CD4-positive, alpha-beta T cell (primary cell): ENCODE measurements at regions of chrX and their contacts with region 1.

Region 1: DNA sequence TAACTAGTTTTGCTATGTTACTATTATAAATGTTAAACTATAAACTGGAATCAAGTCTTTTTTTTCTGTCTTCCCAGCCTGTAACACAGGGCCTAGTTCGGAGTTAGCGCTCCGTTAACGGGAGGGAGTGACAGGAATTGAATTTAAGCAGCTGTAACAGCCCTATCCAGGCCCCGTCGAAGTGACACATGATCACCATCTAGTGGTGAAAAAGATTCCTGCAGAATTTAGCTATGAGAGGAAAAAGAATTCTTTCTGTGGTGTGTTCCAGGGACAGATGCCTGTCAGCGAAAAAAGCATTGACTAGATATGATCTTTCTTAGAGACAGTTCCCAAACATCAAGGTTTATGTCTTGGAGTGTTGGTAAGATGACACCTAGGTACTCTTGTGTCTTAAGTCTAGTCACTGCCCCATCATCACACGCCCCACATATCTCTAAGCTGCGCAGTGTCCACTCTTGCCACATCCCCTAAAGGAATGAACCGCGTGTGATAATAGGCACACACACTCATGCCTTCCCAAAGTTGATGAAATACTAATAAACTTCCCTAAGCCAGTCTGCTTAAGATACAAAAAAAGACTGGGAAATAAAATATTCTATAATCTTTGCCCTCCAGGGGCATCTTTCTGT is 2.0 kb downstream of the GAB3 start:
- DNase-seq: peak in 12 of 14 experiments; percentile 14 to 82 (median 34)
- ATAC-seq: peak; percentile 73
- H3K4me3 ChIP-seq: peak overlapping the region; percentile 22
- H3K4me3 Mint-ChIP-seq: peak overlapping the region; percentile 80
- H3K27ac ChIP-seq: no peak overlapping the region
- H3K27ac Mint-ChIP-seq: peak overlapping the region; percentile 60
- H3K4me1 ChIP-seq: peaks cover 25% of the 10 kb centered on the region
- H3K4me1 Mint-ChIP-seq: peaks cover 34% of the 10 kb centered on the region
- H3K27me3 ChIP-seq: no peaks in the 10 kb centered on the region
- H3K27me3 Mint-ChIP-seq: no peaks in the 10 kb centered on the region
- CTCF ChIP-seq: no peak

Region 2: DNA sequence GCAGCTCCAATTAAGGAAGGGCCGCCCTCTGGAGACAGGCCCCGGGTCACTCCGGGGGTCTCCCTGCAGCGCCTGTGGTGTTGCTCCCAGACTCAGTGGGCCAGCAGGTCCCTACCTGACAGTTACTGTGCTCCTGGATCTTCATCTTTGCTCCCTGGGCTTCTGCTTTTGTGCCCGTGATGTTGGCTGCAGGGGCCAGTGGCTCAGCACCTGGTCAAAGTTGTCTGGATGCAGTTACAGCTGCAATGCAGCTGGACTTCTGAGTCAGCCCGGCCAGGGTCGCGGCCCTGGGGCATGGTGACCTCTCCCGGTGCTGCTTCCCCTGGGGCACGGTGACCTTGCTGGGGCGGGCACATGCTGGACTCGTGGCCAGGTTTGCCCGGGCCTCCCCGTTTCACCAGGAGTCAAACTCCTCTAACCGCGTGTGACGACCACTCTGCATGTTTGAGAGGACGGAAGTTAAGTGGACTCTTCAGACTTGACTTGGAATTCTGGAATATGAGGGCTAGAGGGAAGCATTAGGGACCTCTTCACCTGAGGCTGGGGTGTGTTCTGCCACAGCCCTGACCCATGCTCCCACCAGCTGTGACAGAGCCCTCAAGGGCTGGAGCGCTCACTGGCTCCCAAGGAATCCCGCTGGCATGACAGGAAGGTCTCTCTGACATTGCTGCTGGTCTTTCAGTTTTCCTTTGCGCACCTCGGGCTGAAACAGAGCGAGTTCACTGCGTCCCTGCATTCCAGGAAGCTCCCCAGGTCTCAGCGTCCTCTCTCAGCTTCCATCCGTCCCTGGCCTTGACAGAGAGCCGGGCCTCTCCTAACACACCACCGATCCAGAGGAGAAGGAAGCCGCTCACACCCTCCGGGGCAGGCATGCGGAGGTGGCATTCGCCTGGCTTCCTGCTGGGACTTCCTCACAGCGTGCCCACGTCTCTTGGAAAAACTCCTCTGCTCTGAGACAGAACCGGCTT is 99.0 kb before region 1 on chrX:
- CTCF ChIA-PET with region 1: no interaction called
- POLR2A ChIA-PET with region 1: no interaction called
- intact Hi-C with region 1: no loop called
- DNase-seq: no peak
- ATAC-seq: no peak
- H3K4me3 ChIP-seq: no peak overlapping the region
- H3K4me3 Mint-ChIP-seq: no peak overlapping the region
- H3K27ac ChIP-seq: no peak overlapping the region
- H3K27ac Mint-ChIP-seq: no peak overlapping the region
- H3K4me1 ChIP-seq: no peaks in the 10 kb centered on the region
- H3K4me1 Mint-ChIP-seq: no peaks in the 10 kb centered on the region
- H3K27me3 ChIP-seq: no peaks in the 10 kb centered on the region
- H3K27me3 Mint-ChIP-seq: no peaks in the 10 kb centered on the region
- CTCF ChIP-seq: no peak

Region 3: DNA sequence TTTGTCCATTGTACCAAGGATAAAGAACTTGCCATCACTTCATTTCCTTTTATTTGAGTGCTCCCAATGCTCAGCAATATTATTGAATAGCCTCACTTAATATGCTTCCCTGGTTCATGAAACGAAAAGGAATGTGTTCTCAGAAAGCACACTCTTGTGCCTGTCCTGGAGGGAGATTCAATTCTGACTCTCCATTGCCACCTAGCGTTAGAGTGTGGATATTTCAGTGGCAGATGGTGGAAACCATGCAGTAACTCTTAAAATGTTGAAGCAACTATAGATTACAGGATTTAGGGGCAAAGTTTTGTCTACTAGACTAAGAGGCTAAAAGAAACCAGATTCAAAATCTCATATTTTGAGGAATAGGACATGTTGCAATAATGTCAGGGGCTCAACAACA is 33.9 kb before region 1 on chrX:
- CTCF ChIA-PET with region 1: interaction called, 16 read pairs
- POLR2A ChIA-PET with region 1: interaction called, 30 read pairs
- intact Hi-C with region 1: loop called (anchors 2 to 5 kb)
- DNase-seq: peak in 8 of 14 experiments; percentile 11 to 77 (median 55)
- ATAC-seq: peak; percentile 35
- H3K4me3 ChIP-seq: no peak overlapping the region
- H3K4me3 Mint-ChIP-seq: peak overlapping the region; percentile 1
- H3K27ac ChIP-seq: no peak overlapping the region
- H3K27ac Mint-ChIP-seq: peak overlapping the region; percentile 30
- H3K4me1 ChIP-seq: peaks cover 52% of the 10 kb centered on the region
- H3K4me1 Mint-ChIP-seq: peaks cover 62% of the 10 kb centered on the region
- H3K27me3 ChIP-seq: no peaks in the 10 kb centered on the region
- H3K27me3 Mint-ChIP-seq: no peaks in the 10 kb centered on the region
- CTCF ChIP-seq: peak; percentile 66

Region 4: GRCh38 chrX:154734061-154734781 is 14.6 kb before region 1 on chrX:
- CTCF ChIA-PET with region 1: interaction called, 9 read pairs
- POLR2A ChIA-PET with region 1: interaction called, 8 read pairs
- intact Hi-C with region 1: loop called in 1 of 2 experiments (anchors 2 kb)
- DNase-seq: peak in 11 of 14 experiments; percentile 13 to 72 (median 45)
- ATAC-seq: peak; percentile 73
- H3K4me3 ChIP-seq: peak overlapping the region; percentile 4
- H3K4me3 Mint-ChIP-seq: peak overlapping the region; percentile 81
- H3K27ac ChIP-seq: peak overlapping the region; percentile 40 to 66
- H3K27ac Mint-ChIP-seq: peak overlapping the region; percentile 94
- H3K4me1 ChIP-seq: peaks cover 80% of the 10 kb centered on the region
- H3K4me1 Mint-ChIP-seq: peaks cover 90% of the 10 kb centered on the region
- H3K27me3 ChIP-seq: no peaks in the 10 kb centered on the region
- H3K27me3 Mint-ChIP-seq: no peaks in the 10 kb centered on the region
- CTCF ChIP-seq: no peak

Region 5: GRCh38 chrX:154762523-154763289 is 13.9 kb after region 1 on chrX and contains the start of gene DKC1:
- CTCF ChIA-PET with region 1: interaction called, 5 read pairs
- POLR2A ChIA-PET with region 1: interaction called, 58 read pairs
- intact Hi-C with region 1: no loop called
- DNase-seq: peak; percentile 86 to 98 (median 94)
- ATAC-seq: peak; percentile 87
- H3K4me3 ChIP-seq: peak within 1 kb of the TSS; percentile 80
- H3K4me3 Mint-ChIP-seq: peak within 1 kb of the TSS; percentile 91
- H3K27ac ChIP-seq: peak within 1 kb of the TSS; percentile 55 to 57
- H3K27ac Mint-ChIP-seq: peak within 1 kb of the TSS; percentile 95
- H3K4me1 ChIP-seq: peaks cover 25% of the 10 kb centered on the region
- H3K4me1 Mint-ChIP-seq: peaks cover 23% of the 10 kb centered on the region
- H3K27me3 ChIP-seq: no peaks in the 10 kb centered on the region
- H3K27me3 Mint-ChIP-seq: no peaks in the 10 kb centered on the region
- CTCF ChIP-seq: no peak
- total RNA-seq, gene DKC1: 51.7 to 58.6 TPM

Region 6: GRCh38 chrX:154809939-154810665 is 61.3 kb after region 1 on chrX:
- CTCF ChIA-PET with region 1: no interaction called
- POLR2A ChIA-PET with region 1: no interaction called
- intact Hi-C with region 1: no loop called
- DNase-seq: peak in 1 of 14 experiments; percentile 33
- ATAC-seq: no peak
- H3K4me3 ChIP-seq: no peak overlapping the region
- H3K4me3 Mint-ChIP-seq: no peak overlapping the region
- H3K27ac ChIP-seq: no peak overlapping the region
- H3K27ac Mint-ChIP-seq: no peak overlapping the region
- H3K4me1 ChIP-seq: peaks cover 7% of the 10 kb centered on the region
- H3K4me1 Mint-ChIP-seq: peaks cover 7% of the 10 kb centered on the region
- H3K27me3 ChIP-seq: peaks cover 0 to 2% of the 10 kb centered on the region in 2 experiments
- H3K27me3 Mint-ChIP-seq: no peaks in the 10 kb centered on the region
- CTCF ChIP-seq: no peak

Region 7: GRCh38 chrX:154840856-154841255 is 92.0 kb after region 1 on chrX:
- CTCF ChIA-PET with region 1: no interaction called
- POLR2A ChIA-PET with region 1: no interaction called
- intact Hi-C with region 1: loop called in 1 of 2 experiments (anchors 5 kb)
- DNase-seq: peak in 5 of 14 experiments; percentile 1 to 66 (median 58)
- ATAC-seq: peak; percentile 68
- H3K4me3 ChIP-seq: no peak overlapping the region
- H3K4me3 Mint-ChIP-seq: no peak overlapping the region
- H3K27ac ChIP-seq: no peak overlapping the region
- H3K27ac Mint-ChIP-seq: no peak overlapping the region
- H3K4me1 ChIP-seq: no peaks in the 10 kb centered on the region
- H3K4me1 Mint-ChIP-seq: no peaks in the 10 kb centered on the region
- H3K27me3 ChIP-seq: no peaks in the 10 kb centered on the region
- H3K27me3 Mint-ChIP-seq: no peaks in the 10 kb centered on the region
- CTCF ChIP-seq: peak; percentile 65